ENCODE measurements at regions of chr2 and their contacts with region 1.

Region 1: GRCh38 chr2:224594840-224595239 is 9.7 kb upstream of the CUL3 start:
- DNase-seq: no peak
- ATAC-seq: no peak
- H3K4me3 ChIP-seq: no peak overlapping the region
- H3K4me3 Mint-ChIP-seq: no peak overlapping the region
- H3K27ac ChIP-seq: no peak overlapping the region
- H3K27ac Mint-ChIP-seq: no peak overlapping the region
- H3K4me1 ChIP-seq: no peaks in the 10 kb centered on the region
- H3K4me1 Mint-ChIP-seq: no peaks in the 10 kb centered on the region
- H3K27me3 ChIP-seq: no peaks in the 10 kb centered on the region
- H3K27me3 Mint-ChIP-seq: peaks cover 3 to 7% of the 10 kb centered on the region in 2 donors

Region 2: DNA sequence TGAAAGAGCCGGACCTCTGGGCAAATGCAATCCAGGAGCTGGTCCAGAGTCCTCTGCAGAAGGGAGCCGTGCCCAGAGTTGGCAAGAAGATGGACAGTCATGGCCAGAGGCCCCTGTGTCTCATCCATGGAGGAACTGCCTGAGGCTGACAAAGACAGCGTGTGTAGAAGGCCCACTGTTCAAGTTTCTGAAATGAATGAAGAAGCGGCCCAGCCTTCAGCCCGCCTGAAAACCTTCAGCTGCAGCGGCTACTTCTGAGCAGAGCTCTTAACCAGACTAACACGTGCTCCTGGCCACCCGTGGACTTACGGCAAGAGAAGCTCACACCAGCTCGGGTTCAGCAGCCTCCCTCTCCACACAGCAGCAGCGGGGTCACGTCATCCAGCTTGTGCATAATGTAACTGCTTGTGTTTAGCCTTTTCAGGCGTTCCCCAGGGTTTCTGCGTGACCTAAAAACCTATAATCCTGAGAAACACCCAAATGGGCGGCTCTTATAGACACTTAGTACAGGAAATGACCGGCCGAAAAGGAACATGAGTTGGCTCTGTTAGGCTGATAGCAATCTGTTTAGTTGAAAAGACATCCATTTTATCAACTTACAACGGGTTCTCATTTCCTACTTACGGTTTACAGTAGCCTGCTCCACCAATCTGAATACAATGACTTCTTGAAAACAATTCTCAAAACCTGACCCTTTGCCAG is 193.0 kb before region 1 on chr2 and contains the start of gene FAM124B:
- CTCF ChIA-PET with region 1: no interaction called
- POLR2A ChIA-PET with region 1: no interaction called
- DNase-seq: peak in 30 of 35 experiments; percentile 0 to 51 (median 11)
- ATAC-seq: peak; percentile 51 to 78 (median 54)
- H3K4me3 ChIP-seq: peak within 1 kb of the TSS; percentile 22 to 55
- H3K4me3 Mint-ChIP-seq: peak within 1 kb of the TSS; percentile 48 to 73 (median 70)
- H3K27ac ChIP-seq: no peak within 1 kb of the TSS
- H3K27ac Mint-ChIP-seq: peak within 1 kb of the TSS in 1 of 2 donors; percentile 79
- H3K4me1 ChIP-seq: peaks cover 0 to 18% of the 10 kb centered on the region in 2 experiments
- H3K4me1 Mint-ChIP-seq: peaks cover 3 to 21% (median 16%) of the 10 kb centered on the region in 3 donors
- H3K27me3 ChIP-seq: peaks cover 0 to 16% of the 10 kb centered on the region in 2 experiments
- H3K27me3 Mint-ChIP-seq: peaks cover 5 to 6% of the 10 kb centered on the region in 2 donors
- total RNA-seq, gene FAM124B: 0.20 to 1.2 (median 0.76) TPM in 4 of 5 donors, not detected in the other

Region 3: DNA sequence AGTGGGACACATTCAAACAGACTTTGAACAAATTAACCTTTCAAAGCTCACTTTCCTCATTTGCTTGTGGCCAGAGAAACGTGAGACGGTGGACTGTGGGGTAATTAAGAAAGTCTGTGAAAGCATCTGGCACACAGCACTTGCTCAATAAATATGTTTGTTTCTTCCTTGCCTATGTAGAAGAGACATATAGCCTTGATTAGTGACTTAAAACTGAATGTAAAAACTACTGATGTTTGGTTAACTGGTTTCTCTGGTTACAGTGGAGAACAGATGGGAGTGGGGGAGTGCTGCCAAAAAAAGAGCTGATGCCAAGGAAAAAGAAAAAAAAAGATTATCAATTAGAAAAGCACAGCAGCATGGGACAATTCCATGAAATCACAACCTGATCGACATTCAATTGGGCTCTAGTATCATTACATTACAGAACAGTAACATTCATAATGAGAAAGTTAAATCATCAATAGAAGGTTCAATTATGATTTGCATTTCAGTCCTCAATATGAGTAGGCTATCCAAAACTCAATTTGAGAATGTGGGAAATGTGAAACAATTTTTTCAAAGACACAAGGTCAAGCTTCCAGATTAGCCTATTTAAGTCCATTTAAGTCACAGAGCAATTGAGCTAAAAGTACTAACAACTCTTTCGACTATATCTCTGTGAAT is 24.4 kb before region 1 on chr2:
- CTCF ChIA-PET with region 1: no interaction called
- POLR2A ChIA-PET with region 1: interaction called in 1 of 2 experiments, 13 read pairs
- DNase-seq: no peak
- ATAC-seq: no peak
- H3K4me3 ChIP-seq: no peak overlapping the region
- H3K4me3 Mint-ChIP-seq: peak overlapping the region in 2 of 3 donors; percentile 26 to 32
- H3K27ac ChIP-seq: no peak overlapping the region
- H3K27ac Mint-ChIP-seq: peak overlapping the region in 1 of 2 donors; percentile 16
- H3K4me1 ChIP-seq: peaks cover 21 to 56% of the 10 kb centered on the region in 2 experiments
- H3K4me1 Mint-ChIP-seq: peaks cover 68 to 72% (median 70%) of the 10 kb centered on the region in 3 donors
- H3K27me3 ChIP-seq: no peaks in the 10 kb centered on the region
- H3K27me3 Mint-ChIP-seq: no peaks in the 10 kb centered on the region

Region 4: GRCh38 chr2:225156853-225157451 is 562.1 kb after region 1 on chr2:
- CTCF ChIA-PET with region 1: no interaction called
- POLR2A ChIA-PET with region 1: no interaction called
- DNase-seq: no peak
- ATAC-seq: no peak
- H3K4me3 ChIP-seq: no peak overlapping the region
- H3K4me3 Mint-ChIP-seq: no peak overlapping the region
- H3K27ac ChIP-seq: no peak overlapping the region
- H3K27ac Mint-ChIP-seq: no peak overlapping the region
- H3K4me1 ChIP-seq: no peaks in the 10 kb centered on the region
- H3K4me1 Mint-ChIP-seq: no peaks in the 10 kb centered on the region
- H3K27me3 ChIP-seq: no peaks in the 10 kb centered on the region
- H3K27me3 Mint-ChIP-seq: no peaks in the 10 kb centered on the region